ENCODE measurements at regions of chr1 and their contacts with region 1.

Region 1: GRCh38 chr1:44739361-44740178 is at the start of gene KIF2C:
- DNase-seq: peak; percentile 98
- total RNA-seq, gene KIF2C: 1.3 TPM

Region 2: GRCh38 chr1:44775078-44775929 is 35.7 kb after region 1 on chr1 and contains the start of gene RPS8:
- intact Hi-C with region 1: loop called (anchors 1 kb)
- DNase-seq: peak; percentile 96
- total RNA-seq, gene RPS8: 581 TPM